Heart right ventricle (tissue), 16 donors: ENCODE measurements at regions of chr1 and their contacts with region 1.

Region 1: DNA sequence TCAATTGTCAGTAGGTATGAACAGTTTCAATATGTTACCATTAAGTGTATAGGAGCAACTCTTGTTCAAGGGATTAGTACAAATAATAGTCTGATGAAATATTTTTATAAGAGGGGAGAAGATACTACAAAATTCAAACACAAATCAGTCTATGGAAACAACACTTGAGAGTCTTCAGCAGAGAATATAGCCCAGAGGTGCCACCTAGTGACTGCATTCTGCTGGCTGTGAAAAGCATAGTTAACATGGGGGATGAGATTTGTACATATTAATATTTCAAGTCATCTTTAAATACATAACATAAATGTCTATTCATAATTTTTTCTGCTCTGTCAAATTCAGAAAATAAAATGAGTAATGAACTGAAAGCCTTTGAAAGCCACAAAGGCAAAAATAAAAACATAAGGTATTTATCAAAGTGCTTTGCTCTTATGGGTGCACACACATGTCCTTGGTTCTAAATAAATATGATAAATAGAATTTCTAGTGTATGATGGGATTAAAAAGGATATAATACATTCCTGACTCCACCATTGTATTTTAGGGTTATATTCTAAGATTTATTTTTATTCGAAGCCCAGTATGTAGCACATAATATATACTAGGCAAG is 440.9 kb upstream of the ZRANB2 start:
- DNase-seq: peak in 1 of 2 donors; percentile 24
- ATAC-seq: peak in 2 of 8 donors; percentile 48 to 51
- H3K4me3 ChIP-seq: no peak overlapping the region
- H3K27ac ChIP-seq: no peak overlapping the region
- H3K4me1 ChIP-seq: no peaks in the 10 kb centered on the region
- H3K27me3 ChIP-seq: no peaks in the 10 kb centered on the region
- CTCF ChIP-seq: peak; percentile 22 to 71 (median 58)

Region 2: DNA sequence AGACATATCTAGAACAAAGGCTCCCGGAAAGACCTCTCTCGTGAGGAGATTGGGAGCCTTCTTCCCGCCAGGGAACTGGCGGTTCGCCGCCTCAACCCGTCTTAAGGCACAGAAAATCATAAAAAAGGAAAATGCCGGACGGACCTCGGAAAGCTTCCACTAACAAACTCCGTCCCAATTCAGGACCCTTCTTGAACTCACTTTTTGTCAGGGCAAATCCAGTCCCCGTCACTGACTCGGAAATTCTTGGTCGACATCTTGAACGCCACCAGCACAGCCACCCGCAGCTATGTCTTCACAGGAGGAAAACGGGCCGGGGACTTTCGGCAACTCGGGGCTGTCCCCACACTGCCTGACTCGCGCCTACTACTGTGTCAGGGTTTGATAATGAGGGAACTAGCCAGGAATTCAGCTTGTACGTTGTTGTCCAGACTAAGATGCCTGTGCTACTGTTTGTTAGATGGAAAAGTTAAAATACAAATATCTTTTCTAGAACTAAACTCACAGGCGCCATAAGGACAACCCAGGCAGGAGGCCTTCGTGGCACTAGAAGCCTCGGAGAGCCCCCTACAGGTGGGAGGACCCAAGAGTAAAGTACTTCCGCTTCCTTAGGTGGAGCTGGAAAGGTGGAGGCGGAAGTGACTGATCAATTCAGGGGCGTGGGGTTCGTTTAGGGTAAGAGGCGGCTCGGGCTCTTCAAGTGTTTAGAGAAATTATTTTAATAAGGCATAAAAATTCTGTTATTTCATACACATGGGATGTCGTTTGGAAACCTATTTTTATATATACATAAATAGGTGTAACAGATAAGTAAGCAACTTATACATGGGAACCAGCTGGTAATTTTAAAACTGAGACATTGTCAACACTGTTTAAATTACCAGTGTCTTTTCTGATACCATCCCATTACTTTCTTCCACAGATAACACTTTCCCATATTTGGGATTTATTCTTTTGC is 440.7 kb before region 1 on chr1 and contains the start of gene ZRANB2:
- intact Hi-C with region 1: loop called in 1 of 10 experiments (anchors 10 kb)
- DNase-seq: peak; percentile 88 to 94
- ATAC-seq: peak; percentile 97 to 99 (median 98)
- H3K4me3 ChIP-seq: peak within 1 kb of the TSS; percentile 72 to 90 (median 84)
- H3K27ac ChIP-seq: peak within 1 kb of the TSS; percentile 46 to 94 (median 90)
- H3K4me1 ChIP-seq: peaks cover 6 to 34% (median 18%) of the 10 kb centered on the region in 9 donors
- H3K27me3 ChIP-seq: peaks cover 0 to 9% (median 3%) of the 10 kb centered on the region in 7 donors
- CTCF ChIP-seq: peak; percentile 37 to 92 (median 72)
- total RNA-seq, gene ZRANB2: 43.4 to 54.9 (median 48.4) TPM

Region 3: DNA sequence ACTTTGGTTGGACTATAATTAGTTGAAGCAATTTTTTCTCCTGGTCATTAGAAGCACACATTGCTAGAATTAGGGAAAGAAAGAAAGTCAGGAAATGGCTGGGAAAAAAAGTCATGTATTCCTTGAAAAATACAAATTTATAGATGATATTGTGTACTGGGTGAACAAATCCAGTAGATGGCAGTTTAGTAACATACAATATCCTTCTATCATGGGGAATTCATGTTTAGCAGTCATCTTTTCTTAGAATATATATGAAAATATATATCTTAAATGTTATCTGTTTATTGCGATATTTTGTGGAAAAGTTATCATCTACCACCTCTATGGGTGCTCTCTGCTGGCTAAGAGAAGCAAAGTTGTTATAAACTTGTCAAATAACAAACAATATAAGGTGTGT is 427.8 kb before region 1 on chr1:
- intact Hi-C with region 1: loop called in 3 of 10 experiments (anchors 10 kb)
- DNase-seq: no peak
- ATAC-seq: no peak
- H3K4me3 ChIP-seq: no peak overlapping the region
- H3K27ac ChIP-seq: no peak overlapping the region
- H3K4me1 ChIP-seq: no peaks in the 10 kb centered on the region
- H3K27me3 ChIP-seq: no peaks in the 10 kb centered on the region
- CTCF ChIP-seq: peak in 7 of 9 donors; percentile 20 to 54 (median 42)

Region 4: GRCh38 chr1:71196685-71197084 is 325.1 kb before region 1 on chr1:
- intact Hi-C with region 1: loop called in 8 of 10 experiments (anchors 5 to 10 kb)
- DNase-seq: no peak
- ATAC-seq: no peak
- H3K4me3 ChIP-seq: no peak overlapping the region
- H3K27ac ChIP-seq: no peak overlapping the region
- H3K4me1 ChIP-seq: peaks cover 0 to 6% (median 0%) of the 10 kb centered on the region in 9 donors
- H3K27me3 ChIP-seq: no peaks in the 10 kb centered on the region
- CTCF ChIP-seq: peak in 8 of 9 donors; percentile 29 to 65 (median 42)

Region 5: GRCh38 chr1:71294178-71294577 is 227.6 kb before region 1 on chr1:
- intact Hi-C with region 1: no loop called
- DNase-seq: no peak
- ATAC-seq: no peak
- H3K4me3 ChIP-seq: no peak overlapping the region
- H3K27ac ChIP-seq: no peak overlapping the region
- H3K4me1 ChIP-seq: no peaks in the 10 kb centered on the region
- H3K27me3 ChIP-seq: no peaks in the 10 kb centered on the region
- CTCF ChIP-seq: no peak

Region 6: DNA sequence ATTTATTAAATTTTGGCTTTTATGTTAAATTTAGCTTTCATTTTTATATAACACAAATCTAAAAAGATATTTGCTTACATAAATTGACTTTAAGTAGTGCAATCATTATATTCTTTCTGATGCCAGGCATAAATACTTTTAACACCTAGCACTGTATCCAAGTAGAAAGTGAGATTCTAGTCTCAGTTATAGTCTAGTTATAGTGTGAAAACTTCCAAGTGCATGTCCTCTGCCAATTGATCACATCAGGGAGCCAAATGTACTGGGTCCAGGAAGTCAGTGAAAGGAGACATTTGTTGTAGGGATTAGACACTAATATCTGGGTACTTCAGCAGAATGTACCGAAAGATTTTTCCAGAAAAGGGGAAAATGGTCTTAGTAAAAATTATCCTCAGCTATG is 150.2 kb before region 1 on chr1:
- intact Hi-C with region 1: no loop called
- DNase-seq: no peak
- ATAC-seq: no peak
- H3K4me3 ChIP-seq: no peak overlapping the region
- H3K27ac ChIP-seq: no peak overlapping the region
- H3K4me1 ChIP-seq: no peaks in the 10 kb centered on the region
- H3K27me3 ChIP-seq: no peaks in the 10 kb centered on the region
- CTCF ChIP-seq: no peak